ENCODE measurements at regions of chr14 and their contacts with region 1.

Region 1: DNA sequence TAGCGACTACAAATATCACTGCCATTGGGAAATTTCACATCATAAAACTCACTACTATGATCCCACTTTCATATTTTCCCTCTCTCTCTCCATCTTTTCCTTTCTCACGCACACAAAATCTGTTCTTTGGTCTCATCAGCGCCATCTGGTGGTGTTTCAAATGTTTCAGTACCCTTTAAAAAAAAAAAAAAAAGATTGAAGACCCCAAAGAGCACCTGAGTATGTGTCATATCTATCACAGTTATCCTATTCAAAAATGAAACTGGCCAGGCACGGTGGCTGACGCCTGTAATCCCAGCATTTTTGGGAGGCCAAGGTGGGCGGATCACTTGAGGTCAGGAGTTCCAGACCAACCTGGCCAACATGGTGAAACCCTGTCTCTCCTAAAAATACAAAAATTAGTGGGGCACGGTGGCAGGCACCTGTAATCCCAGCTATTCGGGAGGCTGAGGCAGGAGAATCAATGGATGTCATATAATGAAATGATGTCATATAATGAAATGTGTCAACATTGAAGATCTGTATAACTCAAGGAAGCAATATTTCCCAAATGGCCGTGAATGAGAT is 72.4 kb downstream of the TTC9 start:
- DNase-seq: no peak
- ATAC-seq: peak; percentile 74
- H3K4me3 ChIP-seq: no peak overlapping the region
- H3K27ac ChIP-seq: no peak overlapping the region
- H3K4me1 ChIP-seq: no peaks in the 10 kb centered on the region
- H3K27me3 ChIP-seq: no peaks in the 10 kb centered on the region

Region 2: DNA sequence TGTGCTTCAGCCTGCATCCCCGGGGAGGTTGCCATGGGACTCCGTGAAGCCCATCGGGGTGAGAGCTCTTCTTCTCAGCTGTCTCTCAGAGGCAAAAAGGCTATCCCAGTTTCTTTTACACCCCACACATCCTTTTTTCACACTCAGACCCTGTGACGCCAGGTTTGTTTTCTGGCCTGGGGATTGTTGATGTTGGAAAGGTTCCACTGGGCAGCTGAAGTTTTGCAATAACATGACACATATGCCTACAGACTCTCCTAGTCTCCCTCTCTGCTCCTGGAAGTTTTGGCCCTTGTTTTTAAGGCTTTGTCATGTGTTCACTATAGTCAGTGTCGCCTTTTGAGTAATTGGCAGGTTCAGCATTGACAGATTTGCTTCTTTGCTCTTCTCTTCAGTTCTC is 716.3 kb before region 1 on chr14:
- intact Hi-C with region 1: no loop called
- DNase-seq: no peak
- ATAC-seq: no peak
- H3K4me3 ChIP-seq: no peak overlapping the region
- H3K27ac ChIP-seq: no peak overlapping the region
- H3K4me1 ChIP-seq: no peaks in the 10 kb centered on the region
- H3K27me3 ChIP-seq: no peaks in the 10 kb centered on the region

Region 3: DNA sequence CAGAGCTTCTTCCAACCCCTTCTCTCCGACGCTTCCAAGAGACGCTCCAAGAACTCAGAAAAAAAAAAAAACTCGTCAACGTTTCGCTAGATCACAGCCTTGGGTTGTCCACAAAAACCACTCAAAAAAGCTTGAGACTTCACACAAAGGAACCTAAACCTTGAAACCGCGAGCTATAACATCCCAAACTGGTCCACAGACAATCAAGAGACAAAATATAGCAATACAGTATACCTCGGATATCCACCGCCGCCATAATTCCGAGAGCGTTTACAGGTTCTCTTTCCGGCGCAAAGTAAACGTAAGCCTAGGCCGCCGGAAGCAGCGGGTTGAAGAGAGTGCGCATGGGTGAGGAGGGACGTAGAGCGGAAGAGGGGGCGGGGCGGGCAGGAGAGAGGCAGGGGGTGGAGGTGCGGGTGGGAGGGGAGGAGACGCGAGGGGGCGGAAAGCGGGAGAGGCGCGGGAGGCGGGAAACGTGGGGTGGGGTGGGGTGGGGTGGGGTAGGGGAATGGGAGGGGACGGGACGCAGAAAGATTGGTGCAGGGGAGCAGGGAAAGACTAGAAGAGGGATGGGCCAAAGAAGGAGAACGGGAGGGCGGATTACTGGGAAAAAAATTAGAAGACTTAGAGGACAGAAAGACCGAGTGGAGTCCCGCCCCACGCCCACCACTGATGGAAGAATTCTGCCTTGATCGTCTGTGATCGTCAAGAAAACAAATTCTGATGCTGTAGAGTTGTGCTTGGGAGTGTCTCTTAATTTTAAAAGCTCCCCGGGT is 113.6 kb before region 1 on chr14 and contains the start of gene MED6:
- intact Hi-C with region 1: loop called in 1 of 2 experiments (anchors 5 kb)
- DNase-seq: peak; percentile 96 to 98
- ATAC-seq: peak; percentile 97
- H3K4me3 ChIP-seq: peak within 1 kb of the TSS; percentile 70 to 100
- H3K27ac ChIP-seq: no peak within 1 kb of the TSS
- H3K4me1 ChIP-seq: peaks cover 0 to 7% of the 10 kb centered on the region in 2 donors
- H3K27me3 ChIP-seq: no peaks in the 10 kb centered on the region
- total RNA-seq, gene MED6: 31.5 to 40.1 TPM

Region 4: GRCh38 chr14:70622111-70622712 is 91.9 kb before region 1 on chr14:
- intact Hi-C with region 1: loop called in 1 of 2 experiments (anchors 1 kb)
- DNase-seq: no peak
- ATAC-seq: no peak
- H3K4me3 ChIP-seq: no peak overlapping the region
- H3K27ac ChIP-seq: no peak overlapping the region
- H3K4me1 ChIP-seq: no peaks in the 10 kb centered on the region
- H3K27me3 ChIP-seq: no peaks in the 10 kb centered on the region

Region 5: DNA sequence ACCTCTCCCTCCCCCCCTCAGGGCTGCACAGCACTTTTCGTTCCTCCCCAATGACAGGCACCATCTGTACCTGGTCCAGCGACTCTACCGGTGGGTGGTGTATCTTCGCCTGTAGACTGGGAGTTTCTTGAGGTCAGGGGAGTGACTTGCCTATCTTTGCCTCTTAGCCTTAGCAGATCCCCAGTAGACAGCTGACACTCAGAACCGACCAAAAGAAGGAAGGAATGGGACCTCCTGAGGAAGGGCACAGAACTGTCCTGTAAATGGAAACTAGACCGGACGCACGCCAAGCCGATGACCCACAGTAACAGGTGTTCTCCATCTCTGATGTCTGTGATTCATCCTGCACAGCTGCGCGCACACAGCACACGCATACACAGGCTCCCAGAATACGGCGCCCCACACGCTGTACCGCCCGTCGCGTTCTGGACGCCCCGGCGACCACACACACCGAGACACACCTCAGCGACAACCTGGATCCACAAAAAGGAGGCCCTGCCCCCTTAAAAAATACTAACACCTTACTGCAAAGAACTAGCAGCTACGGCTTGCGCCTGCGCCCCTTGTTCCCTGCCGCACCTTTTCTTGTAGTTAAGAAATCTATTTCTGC is 73.1 kb before region 1 on chr14:
- intact Hi-C with region 1: loop called in 1 of 2 experiments (anchors 5 kb)
- DNase-seq: peak; percentile 46 to 79
- ATAC-seq: peak; percentile 58
- H3K4me3 ChIP-seq: peak overlapping the region; percentile 93 to 99
- H3K27ac ChIP-seq: no peak overlapping the region
- H3K4me1 ChIP-seq: peaks cover 0 to 5% of the 10 kb centered on the region in 2 donors
- H3K27me3 ChIP-seq: no peaks in the 10 kb centered on the region

Region 6: GRCh38 chr14:70666036-70666686 is 48.0 kb before region 1 on chr14:
- intact Hi-C with region 1: loop called in 1 of 2 experiments (anchors 2 kb)
- DNase-seq: no peak
- ATAC-seq: no peak
- H3K4me3 ChIP-seq: no peak overlapping the region
- H3K27ac ChIP-seq: no peak overlapping the region
- H3K4me1 ChIP-seq: no peaks in the 10 kb centered on the region
- H3K27me3 ChIP-seq: no peaks in the 10 kb centered on the region

Measured in aorta (tissue), 5 donors.